CD8-positive, alpha-beta T cell (primary cell): ENCODE measurements at regions of chr2 and their contacts with region 1.

Region 1: GRCh38 chr2:135931776-135932443 is 53.5 kb downstream of the DARS1 start:
- DNase-seq: no peak
- ATAC-seq: no peak
- H3K4me3 ChIP-seq: no peak overlapping the region
- H3K4me3 Mint-ChIP-seq: no peak overlapping the region
- H3K27ac ChIP-seq: no peak overlapping the region
- H3K27ac Mint-ChIP-seq: no peak overlapping the region
- H3K4me1 ChIP-seq: no peaks in the 10 kb centered on the region
- H3K4me1 Mint-ChIP-seq: peaks cover 18% of the 10 kb centered on the region
- H3K27me3 ChIP-seq: no peaks in the 10 kb centered on the region
- H3K27me3 Mint-ChIP-seq: no peaks in the 10 kb centered on the region
- CTCF ChIP-seq: no peak

Region 2: DNA sequence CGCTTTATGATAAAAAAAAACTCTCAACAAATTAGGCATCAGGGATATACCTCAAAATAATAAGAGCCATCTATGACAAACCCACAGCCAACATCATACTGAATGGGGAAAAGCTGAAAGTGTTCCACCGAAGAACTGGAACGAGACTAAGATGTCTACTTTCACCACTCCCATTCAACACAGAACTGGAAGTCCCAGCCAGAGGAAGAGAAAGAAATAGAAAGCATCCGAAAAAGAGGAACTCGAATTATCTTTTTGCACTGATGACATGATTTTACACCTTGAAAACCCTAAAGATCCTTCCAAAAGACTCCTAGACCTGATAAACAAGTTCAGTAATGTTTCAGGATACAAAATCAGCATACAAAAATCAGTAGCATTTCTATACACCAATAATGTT is 522.5 kb before region 1 on chr2:
- CTCF ChIA-PET with region 1: no interaction called
- POLR2A ChIA-PET with region 1: no interaction called
- intact Hi-C with region 1: no loop called
- DNase-seq: no peak
- ATAC-seq: no peak
- H3K4me3 ChIP-seq: no peak overlapping the region
- H3K4me3 Mint-ChIP-seq: no peak overlapping the region
- H3K27ac ChIP-seq: no peak overlapping the region
- H3K27ac Mint-ChIP-seq: no peak overlapping the region
- H3K4me1 ChIP-seq: no peaks in the 10 kb centered on the region
- H3K4me1 Mint-ChIP-seq: no peaks in the 10 kb centered on the region
- H3K27me3 ChIP-seq: no peaks in the 10 kb centered on the region
- H3K27me3 Mint-ChIP-seq: no peaks in the 10 kb centered on the region
- CTCF ChIP-seq: no peak

Region 3: GRCh38 chr2:136384531-136385303 is 452.8 kb after region 1 on chr2:
- CTCF ChIA-PET with region 1: interaction called, 11 read pairs
- POLR2A ChIA-PET with region 1: interaction called, 3 read pairs
- intact Hi-C with region 1: no loop called
- DNase-seq: peak in 8 of 9 experiments; percentile 32 to 82 (median 60)
- ATAC-seq: peak; percentile 53
- H3K4me3 ChIP-seq: no peak overlapping the region
- H3K4me3 Mint-ChIP-seq: no peak overlapping the region
- H3K27ac ChIP-seq: no peak overlapping the region
- H3K27ac Mint-ChIP-seq: peak overlapping the region; percentile 69
- H3K4me1 ChIP-seq: peaks cover 25% of the 10 kb centered on the region
- H3K4me1 Mint-ChIP-seq: peaks cover 36% of the 10 kb centered on the region
- H3K27me3 ChIP-seq: no peaks in the 10 kb centered on the region
- H3K27me3 Mint-ChIP-seq: no peaks in the 10 kb centered on the region
- CTCF ChIP-seq: peak; percentile 77